ENCODE measurements at regions of chr12 and their contacts with region 1.

Region 1: GRCh38 chr12:8038659-8039114 is 6.2 kb downstream of the FOXJ2 start:
- DNase-seq: peak; percentile 79
- H3K4me3 Mint-ChIP-seq: peak overlapping the region; percentile 54
- H3K27ac Mint-ChIP-seq: no peak overlapping the region
- H3K4me1 Mint-ChIP-seq: peaks cover 51% of the 10 kb centered on the region
- H3K27me3 Mint-ChIP-seq: no peaks in the 10 kb centered on the region
- CTCF ChIP-seq: no peak

Region 2: DNA sequence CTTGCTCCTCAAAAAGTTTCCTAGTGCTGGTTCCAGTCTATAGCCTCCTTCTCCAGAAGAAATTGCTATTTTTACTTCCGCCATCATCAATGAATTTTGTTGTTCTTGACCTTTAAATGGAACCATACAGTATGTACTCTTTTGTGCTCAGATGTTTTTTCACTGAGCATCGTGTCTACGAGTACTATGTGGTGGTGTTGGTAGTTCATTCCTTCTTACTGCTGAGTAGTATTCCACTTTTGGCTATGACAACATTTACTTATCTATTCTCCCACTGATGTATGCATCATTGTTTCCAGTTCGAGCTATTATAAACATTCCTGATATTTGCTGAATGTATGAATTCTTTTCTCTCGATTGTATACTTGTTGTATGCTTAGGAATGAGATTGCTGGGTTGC is 194.6 kb before region 1 on chr12:
- CTCF ChIA-PET with region 1: no interaction called
- POLR2A ChIA-PET with region 1: no interaction called
- intact Hi-C with region 1: no loop called
- DNase-seq: no peak
- H3K4me3 Mint-ChIP-seq: no peak overlapping the region
- H3K27ac Mint-ChIP-seq: no peak overlapping the region
- H3K4me1 Mint-ChIP-seq: no peaks in the 10 kb centered on the region
- H3K27me3 Mint-ChIP-seq: peaks cover 19% of the 10 kb centered on the region
- CTCF ChIP-seq: no peak

Region 3: GRCh38 chr12:8011331-8011730 is 27.4 kb before region 1 on chr12:
- CTCF ChIA-PET with region 1: no interaction called
- POLR2A ChIA-PET with region 1: no interaction called
- intact Hi-C with region 1: no loop called
- DNase-seq: peak; percentile 46
- H3K4me3 Mint-ChIP-seq: no peak overlapping the region
- H3K27ac Mint-ChIP-seq: no peak overlapping the region
- H3K4me1 Mint-ChIP-seq: peaks cover 6% of the 10 kb centered on the region
- H3K27me3 Mint-ChIP-seq: peaks cover 8% of the 10 kb centered on the region
- CTCF ChIP-seq: no peak

Region 4: GRCh38 chr12:8026291-8026900 is 12.3 kb before region 1 on chr12:
- CTCF ChIA-PET with region 1: interaction called, 3 read pairs
- POLR2A ChIA-PET with region 1: interaction called, 15 read pairs
- intact Hi-C with region 1: no loop called
- DNase-seq: peak; percentile 99
- H3K4me3 Mint-ChIP-seq: peak overlapping the region; percentile 99
- H3K27ac Mint-ChIP-seq: peak overlapping the region; percentile 100
- H3K4me1 Mint-ChIP-seq: no peaks in the 10 kb centered on the region
- H3K27me3 Mint-ChIP-seq: no peaks in the 10 kb centered on the region
- CTCF ChIP-seq: no peak

Region 5: GRCh38 chr12:8078398-8078797 is 39.7 kb after region 1 on chr12:
- CTCF ChIA-PET with region 1: interaction called, 17 read pairs
- POLR2A ChIA-PET with region 1: interaction called, 18 read pairs
- intact Hi-C with region 1: loop called (anchors 5 kb)
- DNase-seq: peak; percentile 57
- H3K4me3 Mint-ChIP-seq: no peak overlapping the region
- H3K27ac Mint-ChIP-seq: no peak overlapping the region
- H3K4me1 Mint-ChIP-seq: peaks cover 24% of the 10 kb centered on the region
- H3K27me3 Mint-ChIP-seq: no peaks in the 10 kb centered on the region
- CTCF ChIP-seq: peak; percentile 45

Region 6: GRCh38 chr12:8554451-8555195 is 515.9 kb after region 1 on chr12:
- CTCF ChIA-PET with region 1: no interaction called
- POLR2A ChIA-PET with region 1: no interaction called
- intact Hi-C with region 1: no loop called
- DNase-seq: peak; percentile 35
- H3K4me3 Mint-ChIP-seq: no peak overlapping the region
- H3K27ac Mint-ChIP-seq: no peak overlapping the region
- H3K4me1 Mint-ChIP-seq: peaks cover 6% of the 10 kb centered on the region
- H3K27me3 Mint-ChIP-seq: no peaks in the 10 kb centered on the region
- CTCF ChIP-seq: no peak